ENCODE measurements at regions of chr17 and their contacts with region 1.

Region 1: GRCh38 chr17:27654654-27655524 is 23.9 kb downstream of the LGALS9 start:
- DNase-seq: peak; percentile 83
- H3K4me3 Mint-ChIP-seq: no peak overlapping the region
- H3K27ac Mint-ChIP-seq: no peak overlapping the region
- H3K4me1 Mint-ChIP-seq: peaks cover 4% of the 10 kb centered on the region
- H3K27me3 Mint-ChIP-seq: no peaks in the 10 kb centered on the region

Region 2: DNA sequence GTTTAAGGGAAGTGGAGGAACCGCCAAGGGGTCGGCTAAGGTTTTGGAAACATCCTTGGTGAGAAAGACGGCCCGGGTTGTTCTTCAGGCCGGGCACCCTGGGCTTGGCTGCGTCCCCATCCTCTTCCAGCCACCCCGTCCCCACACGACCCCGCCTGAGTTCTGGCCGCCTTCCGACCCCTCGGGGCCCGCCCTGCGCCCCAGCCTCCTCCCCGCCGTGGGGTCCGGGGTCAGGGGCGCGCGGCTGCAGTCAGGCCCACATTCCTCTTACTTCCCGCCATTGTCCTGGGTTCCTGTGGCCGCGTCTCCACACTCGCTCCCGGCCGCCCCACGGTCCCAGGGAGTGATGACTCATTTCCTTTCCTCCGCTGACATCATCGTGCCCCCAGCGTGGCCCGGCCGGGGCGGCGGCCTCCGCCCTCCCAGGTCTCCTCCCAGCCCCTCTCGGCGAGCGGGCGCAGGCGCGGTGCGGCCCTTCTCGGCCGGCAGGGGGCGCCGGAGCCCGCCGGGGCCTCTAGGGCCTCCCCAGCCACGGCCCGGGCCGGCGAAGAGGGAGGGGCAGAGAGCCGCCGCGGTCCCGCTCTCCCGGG is 301.3 kb before region 1 on chr17:
- CTCF ChIA-PET with region 1: interaction called, 7 read pairs
- POLR2A ChIA-PET with region 1: no interaction called
- intact Hi-C with region 1: loop called (anchors 2 kb)
- DNase-seq: peak; percentile 93
- H3K4me3 Mint-ChIP-seq: peak overlapping the region; percentile 78
- H3K27ac Mint-ChIP-seq: peak overlapping the region; percentile 86
- H3K4me1 Mint-ChIP-seq: peaks cover 22% of the 10 kb centered on the region
- H3K27me3 Mint-ChIP-seq: no peaks in the 10 kb centered on the region

Region 3: GRCh38 chr17:27609611-27610303 is 45.1 kb before region 1 on chr17:
- CTCF ChIA-PET with region 1: interaction called, 207 read pairs
- POLR2A ChIA-PET with region 1: no interaction called
- intact Hi-C with region 1: loop called (anchors 1 kb)
- DNase-seq: peak; percentile 40
- H3K4me3 Mint-ChIP-seq: no peak overlapping the region
- H3K27ac Mint-ChIP-seq: no peak overlapping the region
- H3K4me1 Mint-ChIP-seq: peaks cover 25% of the 10 kb centered on the region
- H3K27me3 Mint-ChIP-seq: no peaks in the 10 kb centered on the region

Region 4: GRCh38 chr17:27665549-27665948 is 10.7 kb after region 1 on chr17:
- CTCF ChIA-PET with region 1: interaction called, 33 read pairs
- POLR2A ChIA-PET with region 1: no interaction called
- intact Hi-C with region 1: no loop called
- DNase-seq: no peak
- H3K4me3 Mint-ChIP-seq: no peak overlapping the region
- H3K27ac Mint-ChIP-seq: no peak overlapping the region
- H3K4me1 Mint-ChIP-seq: no peaks in the 10 kb centered on the region
- H3K27me3 Mint-ChIP-seq: no peaks in the 10 kb centered on the region

Region 5: GRCh38 chr17:27760069-27760885 is 105.4 kb after region 1 on chr17:
- CTCF ChIA-PET with region 1: interaction called, 110 read pairs
- POLR2A ChIA-PET with region 1: no interaction called
- intact Hi-C with region 1: loop called (anchors 1 kb)
- DNase-seq: peak; percentile 80
- H3K4me3 Mint-ChIP-seq: no peak overlapping the region
- H3K27ac Mint-ChIP-seq: no peak overlapping the region
- H3K4me1 Mint-ChIP-seq: no peaks in the 10 kb centered on the region
- H3K27me3 Mint-ChIP-seq: no peaks in the 10 kb centered on the region

Region 6: GRCh38 chr17:27879987-27880608 is 225.2 kb after region 1 on chr17:
- CTCF ChIA-PET with region 1: interaction called, 16 read pairs
- POLR2A ChIA-PET with region 1: no interaction called
- intact Hi-C with region 1: loop called (anchors 2 kb)
- DNase-seq: peak; percentile 84
- H3K4me3 Mint-ChIP-seq: no peak overlapping the region
- H3K27ac Mint-ChIP-seq: no peak overlapping the region
- H3K4me1 Mint-ChIP-seq: peaks cover 16% of the 10 kb centered on the region
- H3K27me3 Mint-ChIP-seq: no peaks in the 10 kb centered on the region